Vagina (tissue), 2 donors: ENCODE measurements at regions of chr7 and their contacts with region 1.

Region 1: DNA sequence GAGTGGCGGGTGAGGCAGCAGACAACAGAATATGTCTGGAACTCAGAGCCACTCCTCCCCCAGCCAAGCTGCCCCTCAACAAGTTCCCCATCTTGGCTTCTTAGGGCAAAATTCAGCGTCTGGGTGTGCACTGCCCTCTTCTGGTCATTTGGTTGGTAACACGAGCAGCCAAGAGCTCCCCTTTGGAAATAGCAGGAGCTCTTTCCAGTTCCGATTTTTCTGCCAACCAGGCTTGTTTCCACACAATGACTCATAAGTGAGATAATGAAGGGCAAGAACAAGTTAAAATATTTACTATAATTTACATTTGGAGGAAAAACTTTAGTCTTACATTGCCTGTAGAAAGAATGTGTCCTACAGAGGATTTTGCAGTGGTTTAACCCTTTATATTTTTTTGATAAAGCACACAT is 70.5 kb downstream of the ADCYAP1R1 start:
- DNase-seq: peak; percentile 88 to 93
- H3K4me3 ChIP-seq: no peak overlapping the region
- H3K27ac ChIP-seq: no peak overlapping the region
- H3K4me1 ChIP-seq: no peaks in the 10 kb centered on the region
- H3K27me3 ChIP-seq: no peaks in the 10 kb centered on the region
- CTCF ChIP-seq: peak; percentile 41 to 85 (median 76)
- POLR2A ChIP-seq: no peak

Region 2: GRCh38 chr7:30134611-30135545 is 987.8 kb before region 1 on chr7 and contains the start of gene MTURN:
- intact Hi-C with region 1: no loop called
- DNase-seq: no peak
- H3K4me3 ChIP-seq: peak within 1 kb of the TSS; percentile 85 to 95
- H3K27ac ChIP-seq: peak within 1 kb of the TSS; percentile 94
- H3K4me1 ChIP-seq: peaks cover 16% of the 10 kb centered on the region
- H3K27me3 ChIP-seq: no peaks in the 10 kb centered on the region
- CTCF ChIP-seq: peak in 1 of 3 experiments; percentile 2
- POLR2A ChIP-seq: peak in 1 of 2 donors; percentile 53
- total RNA-seq, gene MTURN: 44.2 TPM

Region 3: DNA sequence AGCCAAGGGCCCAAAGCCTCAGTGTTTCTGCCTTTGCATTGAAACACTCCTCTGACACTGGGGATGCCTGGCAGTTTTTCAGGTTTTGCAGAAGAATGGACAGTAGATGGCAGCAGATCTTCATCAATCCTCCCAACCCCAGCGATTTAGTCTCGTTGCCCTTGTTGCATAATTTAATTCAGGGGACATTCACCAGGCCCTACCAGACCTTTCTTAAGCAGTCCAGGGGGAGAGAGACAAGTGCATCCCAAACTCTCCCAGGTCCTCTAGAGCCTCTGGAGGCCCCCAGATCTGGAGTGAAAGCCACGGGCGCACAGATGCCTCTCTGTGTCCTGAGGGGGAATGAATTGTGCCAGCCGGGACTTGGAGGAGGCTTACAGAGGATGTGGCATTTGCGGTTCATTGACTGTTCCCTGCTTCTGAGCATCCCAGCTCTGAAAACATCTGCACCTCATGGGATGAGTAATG is 321.8 kb before region 1 on chr7:
- intact Hi-C with region 1: loop called (anchors 10 kb)
- DNase-seq: peak in 1 of 2 donors; percentile 40
- H3K4me3 ChIP-seq: no peak overlapping the region
- H3K27ac ChIP-seq: no peak overlapping the region
- H3K4me1 ChIP-seq: peaks cover 63% of the 10 kb centered on the region
- H3K27me3 ChIP-seq: no peaks in the 10 kb centered on the region
- CTCF ChIP-seq: peak; percentile 72 to 81 (median 75)
- POLR2A ChIP-seq: no peak

Region 4: GRCh38 chr7:30983042-30983913 is 139.4 kb before region 1 on chr7:
- intact Hi-C with region 1: loop called (anchors 5 kb)
- DNase-seq: no peak
- H3K4me3 ChIP-seq: no peak overlapping the region
- H3K27ac ChIP-seq: no peak overlapping the region
- H3K4me1 ChIP-seq: peaks cover 7% of the 10 kb centered on the region
- H3K27me3 ChIP-seq: no peaks in the 10 kb centered on the region
- CTCF ChIP-seq: peak; percentile 71 to 91 (median 88)
- POLR2A ChIP-seq: no peak